ENCODE measurements at regions of chr13 and their contacts with region 1.

Region 1: GRCh38 chr13:51911860-51912510 is 50.2 kb downstream of the CCDC70 start:
- DNase-seq: no peak
- ATAC-seq: no peak
- H3K4me3 Mint-ChIP-seq: no peak overlapping the region
- H3K27ac Mint-ChIP-seq: no peak overlapping the region
- H3K4me1 Mint-ChIP-seq: peaks cover 19% of the 10 kb centered on the region
- H3K27me3 Mint-ChIP-seq: peaks cover 4% of the 10 kb centered on the region
- CTCF ChIP-seq: no peak

Region 2: DNA sequence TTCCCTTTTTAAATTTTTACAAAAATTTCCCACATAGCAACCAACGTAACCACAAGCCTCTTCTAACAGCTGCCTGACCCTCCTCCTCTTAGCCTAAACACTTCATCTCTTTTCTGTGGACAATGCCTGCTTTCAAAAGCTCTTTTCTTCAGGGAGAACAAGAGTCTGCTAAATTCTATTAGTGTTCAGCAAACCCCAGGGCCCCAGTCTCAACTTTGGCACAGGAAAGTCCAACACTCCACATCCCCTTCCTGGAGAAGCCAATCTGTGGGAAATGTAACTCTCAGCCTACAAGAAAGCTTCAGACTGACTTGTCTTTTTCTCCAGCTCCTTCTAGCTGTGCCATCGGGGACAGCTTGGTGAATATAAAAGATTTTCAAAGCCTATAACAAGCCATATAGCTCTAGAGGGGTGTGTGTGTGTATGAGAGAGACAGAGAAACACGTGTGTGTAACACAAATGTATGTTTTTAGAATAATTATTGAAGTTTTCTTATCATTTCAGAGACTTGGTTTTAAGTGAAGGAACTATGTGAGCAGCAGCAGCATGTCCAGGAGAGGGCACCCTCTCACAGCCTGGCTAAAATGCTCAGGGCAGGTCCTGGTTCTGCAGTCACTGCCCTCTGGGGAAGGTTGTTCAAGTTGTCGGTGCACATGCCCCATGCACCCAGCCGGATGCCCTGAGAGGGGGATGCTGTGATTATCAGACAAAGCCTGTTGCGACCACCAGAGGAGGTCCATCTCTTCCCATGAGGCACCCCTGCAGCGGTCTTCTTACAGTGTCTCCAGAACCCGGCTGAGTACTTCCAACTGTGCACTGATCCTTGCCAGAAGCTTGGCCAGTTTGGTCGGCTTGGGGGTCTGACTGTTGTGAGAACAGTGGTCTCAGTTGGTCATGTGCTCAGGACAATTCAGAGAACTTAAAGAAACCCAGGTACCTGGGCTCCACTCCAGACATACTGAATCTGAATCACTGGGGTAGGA is 15.8 kb before region 1 on chr13:
- CTCF ChIA-PET with region 1: interaction called, 11 read pairs
- POLR2A ChIA-PET with region 1: interaction called, 3 read pairs
- intact Hi-C with region 1: no loop called
- DNase-seq: peak; percentile 64
- ATAC-seq: peak; percentile 67
- H3K4me3 Mint-ChIP-seq: no peak overlapping the region
- H3K27ac Mint-ChIP-seq: no peak overlapping the region
- H3K4me1 Mint-ChIP-seq: no peaks in the 10 kb centered on the region
- H3K27me3 Mint-ChIP-seq: no peaks in the 10 kb centered on the region
- CTCF ChIP-seq: peak; percentile 59

Region 3: DNA sequence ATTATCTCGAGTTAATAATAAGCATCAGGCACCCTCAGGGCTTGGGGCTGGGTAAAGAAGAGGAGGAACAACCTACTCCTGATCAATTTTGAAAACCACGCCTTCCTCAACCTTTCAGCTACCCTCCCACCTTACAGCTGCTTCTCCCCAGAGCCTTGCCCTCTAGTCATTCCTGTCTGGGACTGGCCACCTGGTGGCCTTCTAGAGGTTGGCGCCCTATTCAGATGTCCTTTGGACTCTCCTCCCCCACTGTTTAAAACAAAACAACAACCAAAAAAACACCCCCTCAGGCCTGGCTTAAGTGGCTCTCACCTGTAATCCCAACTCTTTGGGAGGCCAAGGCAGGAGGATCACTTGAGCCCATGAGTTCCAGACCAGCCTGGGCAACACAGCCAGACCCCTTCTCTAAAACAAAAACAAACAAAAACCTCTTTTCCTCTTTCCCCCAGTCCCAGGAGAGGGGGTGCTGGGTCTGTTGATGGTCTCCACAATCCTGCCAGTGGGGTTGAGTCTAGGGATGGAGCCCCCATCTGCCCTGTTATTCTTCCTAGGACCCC is 12.1 kb after region 1 on chr13:
- CTCF ChIA-PET with region 1: interaction called, 13 read pairs
- POLR2A ChIA-PET with region 1: no interaction called
- intact Hi-C with region 1: no loop called
- DNase-seq: peak; percentile 32
- ATAC-seq: peak; percentile 65
- H3K4me3 Mint-ChIP-seq: no peak overlapping the region
- H3K27ac Mint-ChIP-seq: no peak overlapping the region
- H3K4me1 Mint-ChIP-seq: peaks cover 7% of the 10 kb centered on the region
- H3K27me3 Mint-ChIP-seq: peaks cover 8% of the 10 kb centered on the region
- CTCF ChIP-seq: peak; percentile 21

Measured in activated CD8-positive, alpha-beta T cell treated with anti-CD3 and anti-CD28 coated beads for 36 hours (primary cell).